HEK293 (cell line): ENCODE measurements at regions of chr2 and their contacts with region 1.

Region 1: GRCh38 chr2:166127217-166128155 is at the start of gene SCN1A:
- H3K4me3 ChIP-seq: no peak within 1 kb of the TSS
- H3K27ac ChIP-seq: no peak within 1 kb of the TSS
- H3K4me1 ChIP-seq: no peaks in the 10 kb centered on the region
- CTCF ChIP-seq: peak; percentile 80

Region 2: GRCh38 chr2:165953655-165954606 is 173.6 kb before region 1 on chr2 and contains the start of gene TTC21B:
- CTCF ChIA-PET with region 1: interaction called, 21 read pairs
- POLR2A ChIA-PET with region 1: interaction called, 4 read pairs
- H3K4me3 ChIP-seq: peak within 1 kb of the TSS; percentile 74
- H3K27ac ChIP-seq: peak within 1 kb of the TSS; percentile 78
- H3K4me1 ChIP-seq: no peaks in the 10 kb centered on the region
- CTCF ChIP-seq: peak; percentile 90

Region 3: DNA sequence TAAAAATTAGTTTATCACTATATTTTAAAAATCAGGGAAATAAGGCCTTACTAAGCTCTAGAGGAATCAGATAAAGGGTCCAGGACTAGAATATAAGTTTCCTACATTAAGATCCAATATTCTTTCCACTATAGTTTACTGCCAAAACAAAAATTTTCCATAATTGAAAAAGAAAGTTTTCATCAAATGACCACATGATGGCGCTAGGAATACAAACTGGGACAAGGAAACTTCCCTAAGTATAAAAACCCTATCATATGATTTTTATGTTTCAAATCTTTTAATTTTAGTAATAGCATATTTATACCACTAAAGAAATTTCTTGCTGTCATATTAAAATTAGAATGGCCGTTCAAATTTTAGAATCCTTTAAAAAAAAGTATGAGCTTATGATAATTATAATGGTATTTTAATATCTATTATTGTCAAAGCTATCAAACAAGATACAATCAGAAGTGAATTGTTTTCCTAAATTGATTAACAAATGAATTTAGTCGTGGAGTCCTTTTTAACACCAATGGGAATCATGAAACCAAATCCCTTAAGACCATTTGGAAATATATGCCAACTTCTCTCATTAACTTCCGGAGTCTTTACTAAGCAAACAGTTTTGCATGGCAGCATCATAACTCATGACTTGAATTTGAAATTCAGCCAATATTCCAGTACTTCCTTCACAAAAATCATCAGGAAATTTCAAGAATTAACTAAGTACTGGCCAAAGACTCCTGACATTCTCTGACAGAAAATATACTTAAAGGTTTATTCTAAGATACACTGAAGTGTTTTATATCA is 69.9 kb before region 1 on chr2:
- CTCF ChIA-PET with region 1: interaction called, 32 read pairs
- POLR2A ChIA-PET with region 1: interaction called, 3 read pairs
- H3K4me3 ChIP-seq: no peak overlapping the region
- H3K27ac ChIP-seq: no peak overlapping the region
- H3K4me1 ChIP-seq: no peaks in the 10 kb centered on the region; the same call in 1 of the 2 replicates
- CTCF ChIP-seq: no peak

Region 4: GRCh38 chr2:166112193-166112605 is 15.3 kb before region 1 on chr2:
- CTCF ChIA-PET with region 1: interaction called, 16 read pairs
- POLR2A ChIA-PET with region 1: no interaction called
- H3K4me3 ChIP-seq: no peak overlapping the region
- H3K27ac ChIP-seq: no peak overlapping the region
- H3K4me1 ChIP-seq: no peaks in the 10 kb centered on the region
- CTCF ChIP-seq: no peak

Region 5: DNA sequence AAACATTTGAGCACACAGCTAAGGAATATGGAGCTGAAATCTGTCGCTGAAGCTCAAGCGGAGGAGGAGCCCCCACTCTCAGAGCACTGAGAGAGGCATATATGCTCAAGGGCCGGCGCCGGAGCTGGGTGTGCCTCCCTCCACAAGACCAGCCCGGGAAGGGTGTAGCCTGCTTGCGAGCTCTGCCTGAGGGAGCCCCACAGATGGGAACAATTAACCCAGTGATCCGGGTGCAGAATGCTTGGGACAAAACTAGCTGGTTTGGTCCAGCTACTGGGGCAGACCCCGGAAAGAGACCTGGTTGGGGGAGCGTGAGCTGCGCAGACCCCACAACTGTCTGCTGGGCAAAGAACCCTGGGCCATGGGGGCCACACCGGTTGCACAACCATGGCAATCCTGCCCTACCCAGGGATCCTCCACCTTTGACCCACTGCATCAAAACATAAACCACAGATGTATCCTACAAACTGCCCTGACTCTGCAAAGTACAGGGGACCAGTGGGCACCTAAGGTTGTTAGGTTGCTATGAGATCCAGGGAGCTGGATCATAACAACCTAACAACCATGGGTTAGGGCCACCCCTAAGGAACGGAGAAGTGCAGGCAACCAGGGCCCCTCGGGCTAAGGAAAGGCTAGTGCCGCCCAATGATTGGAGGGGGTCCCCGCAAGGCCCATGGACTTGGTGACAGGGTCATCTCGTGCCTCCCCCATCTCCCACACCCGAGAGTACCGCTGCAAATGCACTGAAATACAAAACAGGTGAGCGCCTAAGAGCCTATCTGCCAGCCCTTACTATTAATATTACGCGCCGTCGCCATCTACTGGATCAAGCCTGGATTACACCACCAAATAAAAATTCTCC is 53.7 kb after region 1 on chr2:
- CTCF ChIA-PET with region 1: interaction called, 29 read pairs
- POLR2A ChIA-PET with region 1: no interaction called
- H3K4me3 ChIP-seq: no peak overlapping the region
- H3K27ac ChIP-seq: no peak overlapping the region
- H3K4me1 ChIP-seq: no peaks in the 10 kb centered on the region
- CTCF ChIP-seq: peak; percentile 49; the same call in 1 of the 2 replicates

Region 6: GRCh38 chr2:166335284-166335683 is 207.8 kb after region 1 on chr2:
- CTCF ChIA-PET with region 1: no interaction called
- POLR2A ChIA-PET with region 1: no interaction called
- H3K4me3 ChIP-seq: no peak overlapping the region
- H3K27ac ChIP-seq: no peak overlapping the region
- H3K4me1 ChIP-seq: no peaks in the 10 kb centered on the region; the same call in 1 of the 2 replicates
- CTCF ChIP-seq: no peak

Region 7: GRCh38 chr2:166627893-166628292 is 500.4 kb after region 1 on chr2:
- CTCF ChIA-PET with region 1: no interaction called
- POLR2A ChIA-PET with region 1: no interaction called
- H3K4me3 ChIP-seq: no peak overlapping the region
- H3K27ac ChIP-seq: no peak overlapping the region
- H3K4me1 ChIP-seq: peaks cover 3% of the 10 kb centered on the region; the same call in 1 of the 2 replicates
- CTCF ChIP-seq: no peak